Right cardiac atrium (tissue), 5 donors: ENCODE measurements at regions of chr9 and their contacts with region 1.

Region 1: GRCh38 chr9:127611899-127612790 is at the start of gene STXBP1:
- DNase-seq: peak; percentile 91 to 97 (median 97)
- ATAC-seq: peak; percentile 85 to 91
- H3K4me3 ChIP-seq: peak within 1 kb of the TSS; percentile 95
- H3K27ac ChIP-seq: peak within 1 kb of the TSS; percentile 65
- H3K4me1 ChIP-seq: no peaks in the 10 kb centered on the region
- H3K27me3 ChIP-seq: no peaks in the 10 kb centered on the region
- total RNA-seq, gene STXBP1: 30.0 to 43.3 (median 41.2) TPM

Region 2: GRCh38 chr9:127489471-127490115 is 122.6 kb before region 1 on chr9:
- intact Hi-C with region 1: no loop called
- DNase-seq: no peak
- ATAC-seq: no peak
- H3K4me3 ChIP-seq: no peak overlapping the region
- H3K27ac ChIP-seq: no peak overlapping the region
- H3K4me1 ChIP-seq: no peaks in the 10 kb centered on the region
- H3K27me3 ChIP-seq: no peaks in the 10 kb centered on the region

Region 3: DNA sequence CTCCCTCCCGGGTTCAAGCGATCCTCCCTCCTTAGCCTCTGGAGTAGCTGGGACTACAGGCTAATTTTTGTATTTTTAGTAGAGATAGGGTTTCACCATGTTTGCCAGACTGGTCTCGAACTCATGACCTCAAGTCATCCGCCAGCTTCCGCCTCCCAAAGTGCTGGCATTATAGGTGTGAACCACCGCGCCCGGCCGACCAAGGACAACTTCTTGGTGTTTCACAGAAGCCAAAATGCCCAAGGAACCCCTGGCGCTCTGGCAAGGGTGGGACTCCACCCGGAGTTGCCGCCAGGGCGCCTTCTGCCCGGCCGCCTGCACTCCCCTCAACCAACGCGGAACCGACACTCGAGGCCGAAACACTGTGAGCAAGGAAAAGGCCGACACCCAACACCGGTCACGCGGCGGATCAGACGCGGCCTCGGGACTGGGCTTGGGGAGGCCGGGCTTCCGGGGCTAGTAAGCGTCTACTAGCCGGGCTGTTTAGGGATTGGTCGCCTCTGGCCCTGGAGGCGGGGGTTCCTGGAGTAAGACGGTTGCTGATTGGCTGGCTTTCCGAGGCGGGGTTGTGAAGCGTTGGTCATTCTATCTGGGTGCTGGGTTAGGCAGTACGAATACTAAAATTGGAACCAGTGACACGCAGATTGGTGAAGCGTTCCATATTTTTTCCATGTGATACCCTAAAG is 87.0 kb after region 1 on chr9:
- intact Hi-C with region 1: loop called in 1 of 4 experiments (anchors 10 kb)
- DNase-seq: peak; percentile 98 to 99 (median 99)
- ATAC-seq: peak; percentile 99
- H3K4me3 ChIP-seq: peak overlapping the region; percentile 12
- H3K27ac ChIP-seq: peak overlapping the region; percentile 91
- H3K4me1 ChIP-seq: no peaks in the 10 kb centered on the region
- H3K27me3 ChIP-seq: no peaks in the 10 kb centered on the region

Region 4: GRCh38 chr9:127715394-127716337 is 103.5 kb after region 1 on chr9 and contains the starts of genes PTRH1 and TTC16:
- intact Hi-C with region 1: loop called in 2 of 4 experiments (anchors 5 kb)
- DNase-seq: peak; percentile 98 to 99 (median 99)
- ATAC-seq: peak; percentile 96 to 97
- H3K4me3 ChIP-seq: peak within 1 kb of the TSS; percentile 54
- H3K27ac ChIP-seq: peak within 1 kb of the TSS; percentile 49
- H3K4me1 ChIP-seq: no peaks in the 10 kb centered on the region
- H3K27me3 ChIP-seq: no peaks in the 10 kb centered on the region
- total RNA-seq, gene PTRH1: 8.7 to 15.0 (median 11.6) TPM
- total RNA-seq, gene TTC16: 0.06 to 0.14 (median 0.11) TPM in 3 of 4 donors, not detected in the other